Sigmoid colon (tissue), 7 donors: ENCODE measurements at regions of chr1 and their contacts with region 1.

Region 1: DNA sequence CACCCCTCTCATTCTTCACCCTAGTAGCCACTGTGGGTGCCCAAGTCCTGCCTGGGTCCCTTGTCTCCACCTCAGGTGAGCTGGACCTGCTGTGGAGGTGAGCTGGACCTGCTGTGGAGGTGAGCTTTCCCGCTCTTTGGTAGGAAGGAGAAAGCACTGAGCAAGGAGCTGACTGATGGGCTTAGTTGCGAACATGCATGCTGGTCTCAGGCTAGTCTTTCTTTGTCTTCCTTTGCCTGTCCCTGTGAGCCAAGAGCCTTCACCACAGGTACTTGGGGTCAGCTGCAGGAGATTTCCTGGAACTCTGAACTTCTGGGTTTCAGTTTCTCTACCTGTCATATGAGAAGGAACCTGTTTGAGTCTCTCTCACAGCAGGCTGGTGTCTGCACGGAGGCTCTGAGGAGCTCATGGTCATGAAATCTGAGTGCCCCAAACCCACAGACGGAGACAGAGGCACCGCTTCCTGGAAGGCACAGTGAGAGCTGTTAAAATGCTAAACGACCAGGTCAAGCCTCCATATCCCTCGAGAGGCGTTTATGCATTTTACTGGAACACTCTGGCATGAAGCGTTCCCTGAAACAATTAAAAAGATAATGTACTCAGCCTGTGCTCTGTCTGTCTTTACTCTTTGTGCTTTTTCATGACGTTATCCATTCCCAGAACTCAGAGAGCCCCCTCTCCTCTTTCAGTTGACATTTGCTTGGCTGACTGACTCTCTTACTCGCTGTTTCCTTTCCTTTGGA is 69.6 kb downstream of the RHOU start:
- DNase-seq: no peak
- H3K4me3 ChIP-seq: no peak overlapping the region
- H3K27ac ChIP-seq: peak overlapping the region in 3 of 4 donors; percentile 15 to 83 (median 47)
- H3K4me1 ChIP-seq: peaks cover 0 to 54% (median 45%) of the 10 kb centered on the region in 4 donors
- H3K27me3 ChIP-seq: no peaks in the 10 kb centered on the region
- CTCF ChIP-seq: no peak
- EP300 ChIP-seq: peak in 2 of 4 donors; percentile 73 to 82
- POLR2A ChIP-seq: no peak

Region 2: GRCh38 chr1:228902781-228903433 is 98.1 kb after region 1 on chr1:
- intact Hi-C with region 1: loop called (anchors 5 kb)
- DNase-seq: peak; percentile 95
- H3K4me3 ChIP-seq: no peak overlapping the region
- H3K27ac ChIP-seq: peak overlapping the region; percentile 42 to 81 (median 69)
- H3K4me1 ChIP-seq: peaks cover 0 to 46% (median 43%) of the 10 kb centered on the region in 4 donors
- H3K27me3 ChIP-seq: no peaks in the 10 kb centered on the region
- CTCF ChIP-seq: no peak
- EP300 ChIP-seq: no peak
- POLR2A ChIP-seq: no peak

Region 3: DNA sequence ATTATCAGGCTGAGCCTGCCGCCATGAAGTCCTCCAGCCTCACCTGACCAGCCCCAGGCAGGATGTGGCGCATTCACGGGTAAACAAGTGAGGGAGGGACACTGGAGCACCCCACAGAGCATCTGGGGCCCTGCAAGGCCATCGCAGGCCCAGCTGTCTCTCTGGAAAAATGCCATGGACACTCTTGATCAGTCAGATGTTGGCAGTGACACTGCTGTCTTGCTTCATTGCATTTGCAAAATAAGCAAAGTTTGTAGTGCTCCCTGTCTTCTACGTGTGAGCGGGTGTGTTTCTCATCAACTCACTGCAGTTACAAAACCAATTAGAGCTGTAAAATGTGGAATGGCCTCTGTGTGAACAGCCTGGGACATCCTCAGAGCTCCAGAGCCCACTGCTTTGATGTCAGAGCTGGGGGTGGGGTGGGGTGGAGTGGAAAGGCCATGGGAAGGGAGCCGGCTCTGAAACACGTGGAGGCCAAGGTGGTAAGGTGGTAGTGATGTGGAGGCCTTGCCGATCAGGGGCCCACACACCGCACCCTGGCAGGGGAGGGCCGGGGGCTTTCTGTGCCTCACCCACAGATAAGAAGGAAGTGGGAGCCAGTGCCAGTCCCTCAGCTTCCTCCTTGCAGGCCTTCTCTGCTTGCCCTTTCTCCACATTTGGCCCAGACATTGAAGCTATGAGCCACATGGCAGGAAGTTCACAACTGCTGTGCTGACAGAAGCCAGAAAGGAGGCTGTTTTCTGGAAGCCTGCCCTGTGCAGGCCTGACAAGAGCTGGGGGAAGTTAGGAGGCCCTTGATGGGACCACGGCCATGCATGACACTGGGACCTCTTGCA is 185.4 kb after region 1 on chr1:
- intact Hi-C with region 1: loop called (anchors 10 kb)
- DNase-seq: peak; percentile 93
- H3K4me3 ChIP-seq: no peak overlapping the region
- H3K27ac ChIP-seq: peak overlapping the region; percentile 15 to 82 (median 70)
- H3K4me1 ChIP-seq: peaks cover 0 to 53% (median 44%) of the 10 kb centered on the region in 4 donors
- H3K27me3 ChIP-seq: no peaks in the 10 kb centered on the region
- CTCF ChIP-seq: no peak
- EP300 ChIP-seq: peak in 3 of 4 donors; percentile 31 to 78 (median 40)
- POLR2A ChIP-seq: no peak